Activated naive CD4-positive, alpha-beta T cell treated with anti-CD3 and anti-CD28 coated beads for 36 hours (primary cell): ENCODE measurements at regions of chr4 and their contacts with region 1.

Region 1: DNA sequence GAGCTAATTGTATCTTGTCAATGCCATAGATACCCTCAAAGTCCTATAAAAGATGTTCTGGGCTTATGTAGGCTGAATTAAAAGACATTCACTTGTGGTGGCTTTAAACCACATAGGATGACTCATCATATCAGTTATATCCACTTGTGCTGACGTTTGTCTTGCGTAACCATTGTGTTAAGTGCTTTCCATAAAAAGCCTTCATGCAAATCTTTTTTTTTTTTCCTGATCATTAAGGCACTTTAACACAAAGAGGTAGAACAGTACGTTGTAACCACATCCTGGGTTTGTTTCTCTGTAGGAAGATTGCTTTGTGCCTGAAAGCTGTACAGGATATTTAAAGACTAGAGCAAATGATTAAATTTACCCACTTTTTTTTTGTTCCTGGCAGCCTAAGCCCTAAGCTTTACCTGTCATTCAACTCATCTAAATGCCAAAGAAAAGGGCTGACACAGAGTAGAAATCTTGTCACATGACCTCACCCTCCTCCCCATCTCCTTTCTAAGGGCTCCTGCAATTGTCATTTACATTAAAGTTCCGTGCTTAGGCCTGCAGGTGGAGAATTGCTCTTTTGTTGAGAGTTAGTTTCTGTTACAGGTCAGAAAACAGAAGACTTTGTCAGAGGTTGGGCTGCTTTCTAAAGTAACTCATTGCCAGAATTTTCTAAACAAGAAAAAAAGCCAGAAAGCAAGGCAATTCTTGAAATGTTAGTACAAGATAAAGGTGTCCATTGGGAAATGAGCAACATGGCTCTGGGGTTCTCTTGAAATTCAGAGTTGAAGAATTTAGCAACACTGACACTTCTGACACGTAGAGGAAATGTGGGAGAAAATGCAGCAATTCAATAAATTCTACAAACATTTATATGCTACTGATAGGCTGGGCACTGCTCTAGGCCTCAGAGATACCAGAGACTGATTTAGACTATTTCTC is 555.6 kb downstream of the PPARGC1A start:
- DNase-seq: peak; percentile 69
- H3K4me3 Mint-ChIP-seq: peak overlapping the region; percentile 45
- H3K27ac Mint-ChIP-seq: peak overlapping the region; percentile 98
- H3K4me1 Mint-ChIP-seq: peaks cover 38% of the 10 kb centered on the region
- H3K27me3 Mint-ChIP-seq: no peaks in the 10 kb centered on the region

Region 2: DNA sequence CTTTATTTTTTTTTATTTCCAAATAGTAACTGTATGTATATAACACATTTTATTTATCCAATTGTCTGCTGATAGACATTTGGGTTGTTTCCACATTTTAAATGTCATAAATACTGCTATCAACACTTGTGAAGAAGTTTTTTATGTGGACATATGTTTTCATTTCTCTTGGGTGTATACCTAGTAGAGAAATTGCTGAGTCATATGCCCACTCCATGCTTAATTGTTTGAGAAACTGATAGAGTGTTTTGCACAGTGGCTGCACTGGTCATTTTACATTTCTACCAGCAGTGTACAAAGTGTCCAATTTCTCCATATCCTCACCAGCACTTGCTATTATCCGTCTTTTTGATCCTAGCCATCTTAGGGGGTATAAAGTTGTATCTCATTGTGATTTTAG is 73.7 kb before region 1 on chr4:
- CTCF ChIA-PET with region 1: no interaction called
- intact Hi-C with region 1: no loop called
- DNase-seq: no peak
- H3K4me3 Mint-ChIP-seq: no peak overlapping the region
- H3K27ac Mint-ChIP-seq: no peak overlapping the region
- H3K4me1 Mint-ChIP-seq: no peaks in the 10 kb centered on the region
- H3K27me3 Mint-ChIP-seq: no peaks in the 10 kb centered on the region

Region 3: GRCh38 chr4:23290656-23291055 is 43.6 kb before region 1 on chr4:
- CTCF ChIA-PET with region 1: interaction called, 3 read pairs
- intact Hi-C with region 1: loop called (anchors 1 kb)
- DNase-seq: no peak
- H3K4me3 Mint-ChIP-seq: no peak overlapping the region
- H3K27ac Mint-ChIP-seq: no peak overlapping the region
- H3K4me1 Mint-ChIP-seq: peaks cover 17% of the 10 kb centered on the region
- H3K27me3 Mint-ChIP-seq: no peaks in the 10 kb centered on the region

Region 4: DNA sequence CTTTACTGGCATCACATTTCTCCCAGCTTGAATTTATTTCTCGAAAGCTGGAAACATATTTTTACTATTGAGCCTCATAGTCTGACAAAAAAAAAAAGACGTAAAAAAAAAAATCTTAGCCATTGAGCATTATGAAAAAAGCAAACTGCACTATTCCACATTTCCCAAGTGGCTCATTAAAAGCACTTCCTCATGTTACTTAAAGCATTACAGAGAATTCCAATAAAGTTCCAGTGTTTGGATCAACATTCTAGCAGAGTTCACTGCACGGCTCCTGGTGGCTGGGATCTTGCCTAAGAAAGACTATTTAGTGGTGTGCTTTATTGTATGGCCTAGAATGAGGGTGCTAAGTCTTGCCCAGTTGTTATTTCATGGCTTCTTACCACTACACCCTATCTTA is 79.4 kb after region 1 on chr4:
- CTCF ChIA-PET with region 1: no interaction called
- intact Hi-C with region 1: loop called (anchors 1 kb)
- DNase-seq: no peak
- H3K4me3 Mint-ChIP-seq: no peak overlapping the region
- H3K27ac Mint-ChIP-seq: no peak overlapping the region
- H3K4me1 Mint-ChIP-seq: peaks cover 7% of the 10 kb centered on the region
- H3K27me3 Mint-ChIP-seq: peaks cover 2% of the 10 kb centered on the region

Region 5: GRCh38 chr4:24382381-24382780 is 1048.2 kb after region 1 on chr4:
- CTCF ChIA-PET with region 1: no interaction called
- intact Hi-C with region 1: loop called (anchors 2 kb)
- DNase-seq: no peak
- H3K4me3 Mint-ChIP-seq: no peak overlapping the region
- H3K27ac Mint-ChIP-seq: no peak overlapping the region
- H3K4me1 Mint-ChIP-seq: peaks cover 7% of the 10 kb centered on the region
- H3K27me3 Mint-ChIP-seq: peaks cover 22% of the 10 kb centered on the region

Region 6: GRCh38 chr4:24584175-24584850 is 1250.1 kb after region 1 on chr4 and contains the start of gene DHX15:
- CTCF ChIA-PET with region 1: no interaction called
- intact Hi-C with region 1: loop called (anchors 1 kb)
- DNase-seq: peak; percentile 94
- H3K4me3 Mint-ChIP-seq: peak within 1 kb of the TSS; percentile 95
- H3K27ac Mint-ChIP-seq: peak within 1 kb of the TSS; percentile 96
- H3K4me1 Mint-ChIP-seq: peaks cover 37% of the 10 kb centered on the region
- H3K27me3 Mint-ChIP-seq: no peaks in the 10 kb centered on the region
- total RNA-seq, gene DHX15: 197 to 199 TPM

Region 7: GRCh38 chr4:25312496-25313200 is 1978.4 kb after region 1 on chr4 and contains the start of gene ZCCHC4:
- CTCF ChIA-PET with region 1: no interaction called
- intact Hi-C with region 1: loop called (anchors 5 kb)
- DNase-seq: peak; percentile 88
- H3K4me3 Mint-ChIP-seq: peak within 1 kb of the TSS; percentile 99
- H3K27ac Mint-ChIP-seq: peak within 1 kb of the TSS; percentile 89
- H3K4me1 Mint-ChIP-seq: peaks cover 22% of the 10 kb centered on the region
- H3K27me3 Mint-ChIP-seq: peaks cover 8% of the 10 kb centered on the region
- total RNA-seq, gene ZCCHC4: 10.5 to 11.9 TPM